Caco-2 (cell line): ENCODE measurements at regions of chr11 and their contacts with region 1.

Region 1: GRCh38 chr11:129861702-129862113 is 33.7 kb downstream of the NFRKB start:
- DNase-seq: peak; percentile 96 to 99
- H3K4me3 ChIP-seq: no peak overlapping the region
- H3K4me3 Mint-ChIP-seq: peak overlapping the region; percentile 83
- H3K27ac Mint-ChIP-seq: peak overlapping the region; percentile 95
- H3K4me1 ChIP-seq: peaks cover 53% of the 10 kb centered on the region
- H3K4me1 Mint-ChIP-seq: peaks cover 41% of the 10 kb centered on the region
- H3K27me3 ChIP-seq: no peaks in the 10 kb centered on the region
- H3K27me3 Mint-ChIP-seq: no peaks in the 10 kb centered on the region
- CTCF ChIP-seq: no peak

Region 2: GRCh38 chr11:129779342-129779741 is 82.4 kb before region 1 on chr11:
- CTCF ChIA-PET with region 1: interaction called, 3 read pairs
- POLR2A ChIA-PET with region 1: interaction called, 10 read pairs
- intact Hi-C with region 1: loop called (anchors 2 kb)
- DNase-seq: peak; percentile 76 to 79
- H3K4me3 ChIP-seq: peak overlapping the region; percentile 11; the same call in 1 of the 2 replicates
- H3K4me3 Mint-ChIP-seq: peak overlapping the region; percentile 71
- H3K27ac Mint-ChIP-seq: peak overlapping the region; percentile 90
- H3K4me1 ChIP-seq: peaks cover 33% of the 10 kb centered on the region
- H3K4me1 Mint-ChIP-seq: peaks cover 30% of the 10 kb centered on the region
- H3K27me3 ChIP-seq: no peaks in the 10 kb centered on the region
- H3K27me3 Mint-ChIP-seq: no peaks in the 10 kb centered on the region
- CTCF ChIP-seq: no peak

Region 3: DNA sequence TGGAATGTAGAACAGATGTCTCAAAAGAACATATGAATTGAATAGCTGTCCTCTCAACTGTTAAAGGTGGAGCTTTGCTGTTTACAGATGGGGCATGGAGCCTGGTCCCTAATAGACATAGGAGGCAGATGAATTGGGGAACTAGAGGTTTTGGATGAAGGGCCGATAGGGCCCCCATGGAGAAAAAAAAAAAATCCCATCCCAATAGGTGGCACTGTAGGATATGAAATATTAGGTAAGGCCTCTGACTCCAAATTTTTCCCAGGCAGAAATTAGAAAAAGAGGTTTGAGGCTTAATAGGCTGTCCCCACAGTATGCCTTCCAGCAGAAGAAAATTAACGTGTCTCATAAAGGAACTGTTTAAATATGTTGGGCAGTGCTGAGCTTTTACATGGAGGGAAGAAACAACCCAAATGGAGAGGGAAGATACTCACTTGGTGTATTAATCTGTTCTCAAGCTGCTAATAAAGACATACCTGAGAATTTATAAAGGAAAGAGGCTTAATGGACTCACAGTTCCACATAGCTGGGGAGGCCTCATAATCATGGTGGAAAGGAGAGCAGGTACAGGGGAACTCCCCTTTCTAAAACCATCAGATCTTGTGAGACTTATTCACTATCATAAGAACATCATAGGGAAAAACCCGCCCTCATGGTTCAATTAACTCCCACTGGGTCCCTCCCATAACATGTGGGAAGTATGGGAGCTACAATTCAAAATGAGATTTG is 76.2 kb before region 1 on chr11:
- CTCF ChIA-PET with region 1: interaction called, 4 read pairs
- POLR2A ChIA-PET with region 1: interaction called, 3 read pairs
- intact Hi-C with region 1: loop called (anchors 2 kb)
- DNase-seq: peak in 1 of 2 experiments; percentile 66
- H3K4me3 ChIP-seq: no peak overlapping the region
- H3K4me3 Mint-ChIP-seq: no peak overlapping the region
- H3K27ac Mint-ChIP-seq: peak overlapping the region; percentile 4
- H3K4me1 ChIP-seq: peaks cover 18% of the 10 kb centered on the region
- H3K4me1 Mint-ChIP-seq: peaks cover 18% of the 10 kb centered on the region
- H3K27me3 ChIP-seq: no peaks in the 10 kb centered on the region
- H3K27me3 Mint-ChIP-seq: no peaks in the 10 kb centered on the region
- CTCF ChIP-seq: peak; percentile 2 to 52

Region 4: DNA sequence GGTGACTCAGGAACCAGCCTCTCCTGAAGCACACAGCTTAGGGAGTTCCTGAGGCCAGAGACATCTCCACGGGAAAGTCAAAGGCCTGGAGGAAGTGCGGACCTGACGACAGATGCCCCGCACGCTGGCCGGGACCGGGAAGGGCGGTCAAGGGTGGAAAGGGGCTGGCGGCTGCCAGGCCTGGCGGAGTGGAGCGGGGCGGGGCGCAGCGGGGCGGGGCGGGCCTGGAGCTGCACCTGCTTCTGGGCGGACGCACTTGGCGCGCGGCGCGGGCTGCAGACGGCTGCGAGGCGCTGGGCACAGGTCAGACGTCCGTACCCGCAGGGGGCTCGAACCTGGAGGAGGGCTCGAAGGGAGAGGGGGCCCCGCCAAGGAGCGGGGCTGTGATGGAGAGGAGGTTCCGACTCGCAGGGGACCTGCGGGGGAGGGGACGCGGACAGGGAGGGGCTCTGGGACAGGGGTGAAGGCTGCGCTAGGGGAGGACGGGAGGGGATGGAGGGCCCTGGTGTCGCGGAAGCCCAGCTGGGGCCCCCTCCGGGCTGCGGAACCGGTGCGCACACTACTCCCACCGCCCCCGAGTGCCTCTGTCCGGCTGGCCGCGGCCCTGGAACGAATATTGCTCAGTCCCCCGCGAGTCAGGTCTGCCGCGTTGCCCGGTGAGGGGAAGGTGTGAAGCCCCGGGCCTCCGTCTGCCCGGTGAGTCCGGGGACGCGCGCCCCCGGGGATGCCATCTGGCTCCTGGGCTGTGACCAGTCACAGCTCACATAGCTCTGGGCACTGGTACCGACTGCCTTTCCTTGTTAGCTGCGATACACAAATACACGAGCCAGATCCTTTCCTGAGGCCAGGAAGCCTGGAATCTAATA is 45.9 kb before region 1 on chr11 and contains the start of gene TMEM45B:
- CTCF ChIA-PET with region 1: interaction called, 6 read pairs
- POLR2A ChIA-PET with region 1: interaction called, 35 read pairs
- intact Hi-C with region 1: loop called (anchors 1 kb)
- DNase-seq: peak; percentile 83 to 86
- H3K4me3 ChIP-seq: peak within 1 kb of the TSS; percentile 69
- H3K4me3 Mint-ChIP-seq: peak within 1 kb of the TSS; percentile 98
- H3K27ac Mint-ChIP-seq: peak within 1 kb of the TSS; percentile 97
- H3K4me1 ChIP-seq: peaks cover 25% of the 10 kb centered on the region
- H3K4me1 Mint-ChIP-seq: peaks cover 47% of the 10 kb centered on the region
- H3K27me3 ChIP-seq: no peaks in the 10 kb centered on the region
- H3K27me3 Mint-ChIP-seq: no peaks in the 10 kb centered on the region
- CTCF ChIP-seq: no peak
- total RNA-seq, gene TMEM45B: 58.2 and 60.0 TPM in 2 replicates

Region 5: GRCh38 chr11:129846501-129847335 is 15.0 kb before region 1 on chr11:
- CTCF ChIA-PET with region 1: no interaction called
- POLR2A ChIA-PET with region 1: no interaction called
- intact Hi-C with region 1: loop called (anchors 1 kb)
- DNase-seq: peak; percentile 43 to 48
- H3K4me3 ChIP-seq: no peak overlapping the region
- H3K4me3 Mint-ChIP-seq: peak overlapping the region; percentile 22
- H3K27ac Mint-ChIP-seq: peak overlapping the region; percentile 58
- H3K4me1 ChIP-seq: peaks cover 49% of the 10 kb centered on the region
- H3K4me1 Mint-ChIP-seq: peaks cover 44% of the 10 kb centered on the region
- H3K27me3 ChIP-seq: no peaks in the 10 kb centered on the region
- H3K27me3 Mint-ChIP-seq: no peaks in the 10 kb centered on the region
- CTCF ChIP-seq: no peak

Region 6: GRCh38 chr11:129905402-129905801 is 43.7 kb after region 1 on chr11:
- CTCF ChIA-PET with region 1: no interaction called
- POLR2A ChIA-PET with region 1: interaction called, 11 read pairs
- intact Hi-C with region 1: no loop called
- DNase-seq: peak; percentile 84 to 87
- H3K4me3 ChIP-seq: no peak overlapping the region
- H3K4me3 Mint-ChIP-seq: no peak overlapping the region
- H3K27ac Mint-ChIP-seq: no peak overlapping the region
- H3K4me1 ChIP-seq: peaks cover 17% of the 10 kb centered on the region
- H3K4me1 Mint-ChIP-seq: peaks cover 7% of the 10 kb centered on the region
- H3K27me3 ChIP-seq: no peaks in the 10 kb centered on the region
- H3K27me3 Mint-ChIP-seq: no peaks in the 10 kb centered on the region
- CTCF ChIP-seq: no peak